B cell (primary cell): ENCODE measurements at regions of chrX and their contacts with region 1.

Region 1: DNA sequence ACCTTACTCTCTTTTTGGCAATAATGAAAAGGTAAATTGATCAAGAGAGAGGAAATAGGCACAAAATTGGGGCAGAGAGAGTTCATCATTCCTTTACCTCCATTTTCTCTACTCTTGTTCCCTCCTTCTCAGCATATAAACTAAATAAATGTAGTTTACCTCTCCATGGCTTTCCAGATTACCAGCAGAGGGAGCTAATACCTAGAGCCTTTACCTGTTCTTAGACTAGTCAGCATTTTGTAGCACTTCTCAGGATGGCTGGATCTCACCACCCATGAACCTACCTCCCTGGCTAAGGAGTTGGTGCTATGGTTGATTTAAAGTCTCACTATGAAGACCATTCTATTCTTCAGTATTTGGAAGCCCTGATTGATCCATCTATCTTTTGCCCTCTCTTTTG is 15.7 kb downstream of the OFD1 start:
- DNase-seq: peak; percentile 55
- ATAC-seq: peak; percentile 28
- H3K4me3 ChIP-seq: no peak overlapping the region
- H3K4me3 Mint-ChIP-seq: no peak overlapping the region
- H3K27ac ChIP-seq: peak overlapping the region in 1 of 2 donors; percentile 27
- H3K27ac Mint-ChIP-seq: peak overlapping the region; percentile 41
- H3K4me1 ChIP-seq: peaks cover 31 to 32% of the 10 kb centered on the region in 2 donors
- H3K4me1 Mint-ChIP-seq: peaks cover 44% of the 10 kb centered on the region
- H3K27me3 ChIP-seq: no peaks in the 10 kb centered on the region
- H3K27me3 Mint-ChIP-seq: no peaks in the 10 kb centered on the region
- CTCF ChIP-seq: peak; percentile 48

Region 2: DNA sequence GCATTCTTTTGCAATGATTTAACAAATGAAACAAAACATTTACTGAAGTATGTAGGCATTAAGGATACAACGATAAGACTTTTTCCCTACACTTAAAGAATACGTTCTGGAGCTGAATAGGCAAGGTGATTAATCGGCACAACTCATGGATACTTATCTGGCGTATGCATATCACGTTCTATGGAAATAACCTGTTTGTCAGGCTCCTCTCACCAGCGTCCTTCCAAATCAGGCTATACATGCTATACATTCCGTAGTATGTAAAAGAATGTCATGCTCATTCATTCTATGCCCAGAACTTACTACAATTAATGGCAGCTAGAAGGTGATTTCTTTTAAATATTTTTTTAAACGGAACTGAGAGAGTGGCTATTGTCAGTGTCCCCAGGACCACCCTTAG is 122.9 kb before region 1 on chrX:
- CTCF ChIA-PET with region 1: no interaction called
- POLR2A ChIA-PET with region 1: no interaction called
- intact Hi-C with region 1: no loop called
- DNase-seq: no peak
- ATAC-seq: no peak
- H3K4me3 ChIP-seq: no peak overlapping the region
- H3K4me3 Mint-ChIP-seq: no peak overlapping the region
- H3K27ac ChIP-seq: no peak overlapping the region
- H3K27ac Mint-ChIP-seq: no peak overlapping the region
- H3K4me1 ChIP-seq: no peaks in the 10 kb centered on the region
- H3K4me1 Mint-ChIP-seq: no peaks in the 10 kb centered on the region
- H3K27me3 ChIP-seq: peaks cover 0 to 12% (median 0%) of the 10 kb centered on the region in 4 experiments
- H3K27me3 Mint-ChIP-seq: no peaks in the 10 kb centered on the region
- CTCF ChIP-seq: no peak

Region 3: DNA sequence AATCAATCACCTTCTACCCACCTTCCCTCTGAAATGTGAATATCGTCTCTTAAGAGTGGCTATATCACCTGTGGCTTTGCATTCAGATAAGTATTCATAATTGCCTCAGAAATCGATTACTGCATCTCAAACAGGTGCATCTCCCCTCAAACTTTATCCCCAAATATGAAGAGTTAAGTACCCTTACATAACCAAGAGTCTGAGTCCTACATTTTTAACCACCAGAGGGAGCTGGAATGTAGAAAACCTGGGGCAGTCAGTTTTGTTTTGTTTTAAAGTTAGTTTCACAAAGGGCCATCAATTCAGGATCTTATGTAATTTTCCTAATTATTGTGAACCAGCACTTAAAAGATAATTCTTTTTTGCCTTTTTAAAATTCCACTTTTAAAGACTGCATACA is 91.6 kb before region 1 on chrX:
- CTCF ChIA-PET with region 1: interaction called, 5 read pairs
- POLR2A ChIA-PET with region 1: interaction called, 3 read pairs
- intact Hi-C with region 1: loop called (anchors 1 kb)
- DNase-seq: peak; percentile 70
- ATAC-seq: no peak
- H3K4me3 ChIP-seq: no peak overlapping the region
- H3K4me3 Mint-ChIP-seq: no peak overlapping the region
- H3K27ac ChIP-seq: peak overlapping the region in 1 of 2 donors; percentile 25
- H3K27ac Mint-ChIP-seq: peak overlapping the region; percentile 61
- H3K4me1 ChIP-seq: peaks cover 8 to 9% of the 10 kb centered on the region in 2 donors
- H3K4me1 Mint-ChIP-seq: peaks cover 12% of the 10 kb centered on the region
- H3K27me3 ChIP-seq: no peaks in the 10 kb centered on the region
- H3K27me3 Mint-ChIP-seq: no peaks in the 10 kb centered on the region
- CTCF ChIP-seq: peak; percentile 62

Region 4: GRCh38 chrX:13734278-13735172 is 15.7 kb before region 1 on chrX and contains the starts of genes OFD1 and TRAPPC2:
- CTCF ChIA-PET with region 1: interaction called, 13 read pairs
- POLR2A ChIA-PET with region 1: interaction called, 4 read pairs
- intact Hi-C with region 1: loop called (anchors 2 kb)
- DNase-seq: peak; percentile 94
- ATAC-seq: peak; percentile 80
- H3K4me3 ChIP-seq: peak within 1 kb of the TSS; percentile 73 to 98 (median 76)
- H3K4me3 Mint-ChIP-seq: peak within 1 kb of the TSS; percentile 93
- H3K27ac ChIP-seq: peak within 1 kb of the TSS; percentile 95 to 97
- H3K27ac Mint-ChIP-seq: peak within 1 kb of the TSS; percentile 97
- H3K4me1 ChIP-seq: peaks cover 40 to 43% of the 10 kb centered on the region in 2 donors
- H3K4me1 Mint-ChIP-seq: peaks cover 52% of the 10 kb centered on the region
- H3K27me3 ChIP-seq: no peaks in the 10 kb centered on the region
- H3K27me3 Mint-ChIP-seq: no peaks in the 10 kb centered on the region
- CTCF ChIP-seq: no peak
- total RNA-seq, gene OFD1: 84.9 and 87.8 TPM in 2 replicates
- total RNA-seq, gene TRAPPC2: 28.0 and 30.3 TPM in 2 replicates

Region 5: GRCh38 chrX:13761606-13762414 is 11.6 kb after region 1 on chrX:
- CTCF ChIA-PET with region 1: interaction called, 10 read pairs
- POLR2A ChIA-PET with region 1: interaction called, 5 read pairs
- intact Hi-C with region 1: loop called (anchors 1 kb)
- DNase-seq: no peak
- ATAC-seq: no peak
- H3K4me3 ChIP-seq: no peak overlapping the region
- H3K4me3 Mint-ChIP-seq: no peak overlapping the region
- H3K27ac ChIP-seq: peak overlapping the region; percentile 38 to 49
- H3K27ac Mint-ChIP-seq: peak overlapping the region; percentile 50
- H3K4me1 ChIP-seq: peaks cover 46 to 49% of the 10 kb centered on the region in 2 donors
- H3K4me1 Mint-ChIP-seq: peaks cover 51% of the 10 kb centered on the region
- H3K27me3 ChIP-seq: no peaks in the 10 kb centered on the region
- H3K27me3 Mint-ChIP-seq: no peaks in the 10 kb centered on the region
- CTCF ChIP-seq: no peak

Region 6: GRCh38 chrX:13816643-13817627 is 66.7 kb after region 1 on chrX and contains the start of gene GPM6B:
- CTCF ChIA-PET with region 1: no interaction called
- POLR2A ChIA-PET with region 1: no interaction called
- intact Hi-C with region 1: no loop called
- DNase-seq: no peak
- ATAC-seq: no peak
- H3K4me3 ChIP-seq: no peak within 1 kb of the TSS
- H3K4me3 Mint-ChIP-seq: no peak within 1 kb of the TSS
- H3K27ac ChIP-seq: no peak within 1 kb of the TSS
- H3K27ac Mint-ChIP-seq: no peak within 1 kb of the TSS
- H3K4me1 ChIP-seq: no peaks in the 10 kb centered on the region
- H3K4me1 Mint-ChIP-seq: no peaks in the 10 kb centered on the region
- H3K27me3 ChIP-seq: peaks cover 0 to 8% (median 0%) of the 10 kb centered on the region in 4 experiments
- H3K27me3 Mint-ChIP-seq: peaks cover 6% of the 10 kb centered on the region
- CTCF ChIP-seq: no peak
- total RNA-seq, gene GPM6B: not detected in 2 replicates

Region 7: DNA sequence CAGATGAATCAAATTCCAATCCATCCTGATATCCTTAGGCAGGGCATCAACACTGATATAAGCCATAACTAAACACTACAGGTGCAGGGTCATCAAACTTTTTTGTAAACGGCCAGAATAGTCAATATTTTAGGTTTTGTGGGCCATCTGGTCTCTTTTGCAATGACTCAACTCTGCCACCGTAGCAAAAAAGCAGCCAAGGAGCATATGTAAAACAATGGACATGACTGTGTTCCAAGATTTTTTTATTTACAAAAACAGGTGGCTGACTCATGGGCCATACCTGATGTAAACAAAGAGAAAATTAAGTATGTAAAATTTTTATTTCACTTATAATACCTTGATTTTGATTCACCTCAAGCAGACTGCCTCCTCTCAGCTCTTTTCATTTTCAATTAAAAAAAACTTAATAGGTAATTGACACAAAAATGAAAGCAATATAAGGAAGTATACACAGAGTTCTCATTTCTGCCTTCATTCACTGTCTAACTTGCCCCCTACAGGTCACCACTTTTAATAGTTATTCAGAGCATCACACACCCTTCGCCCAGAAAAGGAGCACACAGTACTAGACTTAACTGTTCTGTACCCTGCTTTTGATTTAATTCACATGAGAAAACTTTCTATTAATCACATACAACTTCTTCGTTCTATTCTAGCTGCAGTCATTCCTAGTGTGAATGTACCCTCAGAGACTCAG is 101.9 kb after region 1 on chrX:
- CTCF ChIA-PET with region 1: no interaction called
- POLR2A ChIA-PET with region 1: no interaction called
- intact Hi-C with region 1: loop called (anchors 1 kb)
- DNase-seq: peak; percentile 33
- ATAC-seq: no peak
- H3K4me3 ChIP-seq: no peak overlapping the region
- H3K4me3 Mint-ChIP-seq: no peak overlapping the region
- H3K27ac ChIP-seq: no peak overlapping the region
- H3K27ac Mint-ChIP-seq: no peak overlapping the region
- H3K4me1 ChIP-seq: no peaks in the 10 kb centered on the region
- H3K4me1 Mint-ChIP-seq: peaks cover 3% of the 10 kb centered on the region
- H3K27me3 ChIP-seq: peaks cover 0 to 3% (median 0%) of the 10 kb centered on the region in 4 experiments
- H3K27me3 Mint-ChIP-seq: no peaks in the 10 kb centered on the region
- CTCF ChIP-seq: peak; percentile 32